Activated CD8-positive, alpha-beta T cell treated with anti-CD3 and anti-CD28 coated beads, Interleukin-2, amount 10 ng/mL, durations not matched to agents 7 days and 5 days (primary cell): ENCODE measurements at regions of chr12 and their contacts with region 1.

Region 1: GRCh38 chr12:53984901-53985709 is at the start of gene HOXC10:
- DNase-seq: peak; percentile 86
- ATAC-seq: peak; percentile 74
- H3K4me3 Mint-ChIP-seq: peak within 1 kb of the TSS; percentile 48
- H3K27ac Mint-ChIP-seq: peak within 1 kb of the TSS; percentile 52
- H3K4me1 Mint-ChIP-seq: peaks cover 43% of the 10 kb centered on the region
- H3K27me3 Mint-ChIP-seq: peaks cover 93% of the 10 kb centered on the region
- total RNA-seq, gene HOXC10: not detected

Region 2: GRCh38 chr12:53995378-53996239 is 10.5 kb after region 1 on chr12:
- CTCF ChIA-PET with region 1: interaction called, 19 read pairs
- POLR2A ChIA-PET with region 1: no interaction called
- DNase-seq: no peak
- ATAC-seq: peak; percentile 28
- H3K4me3 Mint-ChIP-seq: peak overlapping the region; percentile 72
- H3K27ac Mint-ChIP-seq: no peak overlapping the region
- H3K4me1 Mint-ChIP-seq: peaks cover 27% of the 10 kb centered on the region
- H3K27me3 Mint-ChIP-seq: peaks cover 93% of the 10 kb centered on the region

Region 3: DNA sequence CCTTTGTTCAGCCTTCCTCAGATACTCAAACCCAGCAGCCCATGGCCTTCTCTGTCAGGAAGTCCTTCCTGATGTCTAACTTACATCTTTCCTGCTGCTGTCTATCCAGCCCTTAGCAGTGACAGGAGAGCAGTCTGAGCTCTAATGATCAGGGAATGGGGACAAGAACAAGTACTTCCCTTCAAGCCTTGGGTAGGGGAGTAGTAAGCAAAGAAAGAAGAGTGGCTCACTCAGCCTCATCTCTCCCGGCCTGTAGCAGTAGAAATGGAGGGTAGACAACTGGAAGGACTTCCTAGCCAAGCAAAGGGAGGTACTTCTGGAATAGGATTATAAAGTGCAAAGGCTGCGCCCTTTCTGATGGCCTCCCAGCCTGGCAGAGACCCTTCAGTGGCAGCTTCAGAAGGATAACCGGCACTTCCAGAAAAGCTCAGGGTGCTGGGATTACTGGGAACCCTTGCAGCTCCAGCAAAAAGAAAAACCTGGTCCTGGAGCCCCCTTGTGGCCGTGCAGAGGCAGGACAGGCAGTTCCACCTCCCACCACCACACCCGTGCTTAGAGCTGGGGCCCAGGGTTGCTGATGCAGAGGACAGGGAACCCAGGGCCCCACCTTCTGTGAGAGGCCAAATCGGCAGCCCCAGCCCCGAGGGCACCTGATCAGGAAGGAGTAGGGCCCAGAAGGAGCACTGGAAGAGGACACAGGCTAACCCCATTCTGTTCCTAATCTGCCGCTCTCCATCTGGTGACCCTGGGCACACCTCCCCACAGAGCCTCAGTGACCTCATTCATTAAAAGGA is 216.1 kb after region 1 on chr12:
- CTCF ChIA-PET with region 1: interaction called, 35 read pairs
- POLR2A ChIA-PET with region 1: interaction called, 3 read pairs
- DNase-seq: peak; percentile 74
- ATAC-seq: peak; percentile 94
- H3K4me3 Mint-ChIP-seq: no peak overlapping the region
- H3K27ac Mint-ChIP-seq: no peak overlapping the region
- H3K4me1 Mint-ChIP-seq: peaks cover 3% of the 10 kb centered on the region
- H3K27me3 Mint-ChIP-seq: peaks cover 44% of the 10 kb centered on the region